Naive thymus-derived CD4-positive, alpha-beta T cell (primary cell): ENCODE measurements at regions of chr15 and their contacts with region 1.

Region 1: DNA sequence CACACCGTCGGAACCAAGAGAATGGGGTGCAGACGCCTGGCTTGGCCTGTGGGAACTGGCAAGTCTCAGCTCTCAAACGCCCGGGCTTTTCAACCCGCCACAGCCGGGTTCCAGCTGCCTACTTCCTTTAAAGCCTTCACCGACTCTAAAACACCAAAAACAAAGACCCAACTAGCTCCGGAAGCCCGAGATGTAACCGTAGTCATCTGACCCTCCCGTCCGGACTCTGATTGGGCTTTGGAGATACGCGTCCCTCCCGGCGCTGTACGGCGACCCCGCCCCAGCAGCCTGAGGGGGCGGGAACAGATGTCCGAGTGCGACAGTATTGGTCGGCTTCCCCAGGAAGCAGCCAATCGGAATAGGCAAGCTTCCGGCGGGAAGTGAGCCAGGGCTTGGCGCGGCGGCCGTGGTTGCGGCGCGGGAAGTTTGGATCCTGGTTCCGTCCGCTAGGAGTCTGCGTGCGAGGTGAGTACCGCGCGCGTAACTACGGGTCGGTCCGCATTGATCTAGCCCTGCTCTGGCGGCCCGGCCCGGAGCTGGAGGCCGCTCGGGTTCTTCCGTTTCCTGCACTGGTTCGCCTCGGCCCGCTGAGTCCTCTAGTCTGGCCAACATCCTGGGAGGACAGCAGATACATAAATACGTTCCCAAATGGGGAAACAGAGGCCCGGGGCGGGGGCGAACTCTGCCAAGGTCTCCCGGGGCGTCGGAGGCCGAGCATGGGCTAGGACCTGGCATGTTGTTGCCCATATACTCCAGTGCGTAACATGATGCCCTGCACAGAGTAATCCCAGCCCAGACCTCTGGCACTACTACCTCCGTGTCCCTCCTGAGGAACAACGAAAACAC is at the start of gene BLM:
- DNase-seq: peak; percentile 83 to 98 (median 96)
- ATAC-seq: peak; percentile 100
- H3K4me3 ChIP-seq: peak within 1 kb of the TSS; percentile 75
- H3K4me3 Mint-ChIP-seq: peak within 1 kb of the TSS; percentile 92 to 98 (median 95)
- H3K27ac ChIP-seq: peak within 1 kb of the TSS; percentile 85
- H3K27ac Mint-ChIP-seq: peak within 1 kb of the TSS; percentile 81 to 97 (median 95)
- H3K4me1 ChIP-seq: peaks cover 5 to 9% of the 10 kb centered on the region in 2 donors
- H3K4me1 Mint-ChIP-seq: peaks cover 20 to 35% (median 30%) of the 10 kb centered on the region in 7 donors
- H3K27me3 ChIP-seq: no peaks in the 10 kb centered on the region
- H3K27me3 Mint-ChIP-seq: no peaks in the 10 kb centered on the region
- total RNA-seq, gene BLM: 3.5 to 53.1 (median 6.6) TPM

Region 2: GRCh38 chr15:90265271-90266060 is 451.7 kb before region 1 on chr15 and contains the start of gene NGRN:
- CTCF ChIA-PET with region 1: no interaction called
- POLR2A ChIA-PET with region 1: no interaction called
- intact Hi-C with region 1: loop called in 1 of 2 experiments (anchors 1 kb)
- DNase-seq: peak; percentile 81 to 96 (median 93)
- ATAC-seq: peak; percentile 94
- H3K4me3 ChIP-seq: peak within 1 kb of the TSS; percentile 84
- H3K4me3 Mint-ChIP-seq: peak within 1 kb of the TSS; percentile 95 to 99 (median 97)
- H3K27ac ChIP-seq: peak within 1 kb of the TSS; percentile 96
- H3K27ac Mint-ChIP-seq: peak within 1 kb of the TSS; percentile 98 to 100 (median 99)
- H3K4me1 ChIP-seq: peaks cover 36 to 40% of the 10 kb centered on the region in 2 donors
- H3K4me1 Mint-ChIP-seq: peaks cover 22 to 60% (median 48%) of the 10 kb centered on the region in 7 donors
- H3K27me3 ChIP-seq: no peaks in the 10 kb centered on the region
- H3K27me3 Mint-ChIP-seq: no peaks in the 10 kb centered on the region
- total RNA-seq, gene NGRN: 34.1 to 51.5 (median 48.4) TPM

Region 3: GRCh38 chr15:90648137-90649070 is 68.8 kb before region 1 on chr15:
- CTCF ChIA-PET with region 1: interaction called, 5 read pairs
- POLR2A ChIA-PET with region 1: interaction called, 4 read pairs
- intact Hi-C with region 1: loop called (anchors 1 kb)
- DNase-seq: peak in 8 of 9 donors; percentile 48 to 69 (median 58)
- ATAC-seq: peak; percentile 83
- H3K4me3 ChIP-seq: no peak overlapping the region
- H3K4me3 Mint-ChIP-seq: peak overlapping the region; percentile 29 to 83 (median 68)
- H3K27ac ChIP-seq: no peak overlapping the region
- H3K27ac Mint-ChIP-seq: peak overlapping the region in 6 of 9 donors; percentile 31 to 95 (median 47)
- H3K4me1 ChIP-seq: peaks cover 9 to 15% of the 10 kb centered on the region in 2 donors
- H3K4me1 Mint-ChIP-seq: peaks cover 27 to 54% (median 37%) of the 10 kb centered on the region in 7 donors
- H3K27me3 ChIP-seq: no peaks in the 10 kb centered on the region
- H3K27me3 Mint-ChIP-seq: peaks cover 0 to 4% (median 0%) of the 10 kb centered on the region in 5 donors

Region 4: DNA sequence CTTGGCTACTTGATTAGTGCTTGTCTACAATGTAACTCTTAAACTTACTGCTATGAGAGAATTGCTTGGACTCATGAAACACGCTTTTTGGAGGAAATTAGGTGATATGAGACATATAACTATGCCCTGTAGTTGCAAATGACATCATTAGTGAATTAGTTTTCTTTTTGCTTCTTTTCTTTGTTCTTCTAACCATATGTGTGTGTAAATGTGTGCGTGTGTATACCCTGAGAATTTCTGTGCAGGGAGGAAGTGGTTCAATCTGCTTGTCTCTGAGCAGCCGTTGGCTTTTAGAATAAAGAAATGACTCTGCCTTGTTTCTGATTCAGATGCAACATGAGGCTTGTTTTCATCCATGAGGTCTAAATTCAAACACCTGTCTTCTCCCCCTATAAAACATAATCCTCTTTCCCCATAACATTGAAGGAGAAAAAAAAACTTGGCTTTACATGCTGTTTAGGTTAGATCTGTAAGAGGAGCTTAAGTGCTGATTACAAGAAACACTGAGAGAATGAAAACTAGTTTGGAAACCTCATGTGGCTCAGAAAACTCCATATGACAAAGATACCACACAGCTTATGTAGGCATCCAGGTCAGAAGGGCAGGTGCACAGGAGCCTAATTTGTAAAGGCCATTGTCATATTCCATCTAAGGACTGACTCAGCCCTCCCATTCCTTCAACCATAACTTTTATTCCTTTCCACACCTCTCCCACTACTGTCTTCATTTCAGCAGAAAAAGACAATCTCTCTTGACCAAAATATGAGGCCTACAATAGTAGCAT is 30.6 kb before region 1 on chr15:
- CTCF ChIA-PET with region 1: no interaction called
- POLR2A ChIA-PET with region 1: interaction called, 6 read pairs
- intact Hi-C with region 1: loop called (anchors 2 kb)
- DNase-seq: peak in 7 of 9 donors; percentile 52 to 83 (median 72)
- ATAC-seq: peak; percentile 91
- H3K4me3 ChIP-seq: no peak overlapping the region
- H3K4me3 Mint-ChIP-seq: peak overlapping the region; percentile 16 to 77 (median 46)
- H3K27ac ChIP-seq: peak overlapping the region; percentile 24
- H3K27ac Mint-ChIP-seq: peak overlapping the region; percentile 41 to 97 (median 80)
- H3K4me1 ChIP-seq: peaks cover 10 to 20% of the 10 kb centered on the region in 2 donors
- H3K4me1 Mint-ChIP-seq: peaks cover 25 to 51% (median 36%) of the 10 kb centered on the region in 7 donors
- H3K27me3 ChIP-seq: no peaks in the 10 kb centered on the region
- H3K27me3 Mint-ChIP-seq: no peaks in the 10 kb centered on the region

Region 5: DNA sequence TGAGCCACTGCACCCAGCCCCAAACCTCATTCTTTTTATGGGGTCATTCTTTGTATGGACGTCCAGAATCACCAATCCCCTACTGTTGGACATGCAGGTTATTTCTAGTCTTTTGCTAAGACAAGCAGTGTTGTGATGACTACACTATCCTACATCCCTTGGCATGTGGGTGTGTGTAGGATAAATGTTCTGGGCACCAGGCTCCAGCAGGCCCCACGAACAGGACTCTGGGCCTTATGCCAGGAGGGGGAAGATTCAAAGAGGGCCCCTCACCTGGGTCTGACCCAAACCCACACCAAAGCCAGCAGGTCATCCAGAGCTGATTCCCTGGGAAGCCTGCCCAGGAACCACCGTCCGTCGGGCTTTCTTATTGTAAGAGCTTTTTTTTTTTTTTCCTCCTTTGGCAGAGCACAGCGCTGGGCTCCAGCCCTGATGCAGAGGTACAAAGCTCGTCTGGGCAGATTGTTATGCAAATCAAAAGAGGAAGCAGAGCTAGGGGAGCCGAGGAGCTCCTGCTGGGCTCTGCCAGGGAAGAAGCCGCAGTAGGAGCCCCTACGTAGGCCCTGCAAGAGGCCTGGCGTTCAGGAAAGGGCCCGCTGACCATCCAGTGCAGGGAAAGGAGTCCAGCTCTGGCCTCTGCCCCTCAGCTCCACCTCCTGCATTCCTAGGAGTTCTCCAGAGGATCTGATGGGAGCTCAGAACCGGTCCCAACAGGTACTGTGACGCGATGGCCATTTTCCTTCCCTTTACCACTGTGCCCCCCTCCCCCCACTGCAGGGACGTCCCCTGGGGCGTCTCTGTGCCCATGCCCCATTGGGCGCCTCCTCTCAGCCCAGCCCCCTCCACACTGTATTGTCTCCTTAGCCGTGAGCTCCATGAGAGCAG is 122.2 kb after region 1 on chr15:
- CTCF ChIA-PET with region 1: no interaction called
- POLR2A ChIA-PET with region 1: interaction called, 4 read pairs
- intact Hi-C with region 1: loop called in 1 of 2 experiments (anchors 1 kb)
- DNase-seq: peak in 1 of 9 donors; percentile 28
- ATAC-seq: no peak
- H3K4me3 ChIP-seq: peak overlapping the region; percentile 2
- H3K4me3 Mint-ChIP-seq: peak overlapping the region; percentile 32 to 78 (median 58)
- H3K27ac ChIP-seq: peak overlapping the region; percentile 35
- H3K27ac Mint-ChIP-seq: peak overlapping the region in 8 of 9 donors; percentile 53 to 91 (median 79)
- H3K4me1 ChIP-seq: peaks cover 18 to 27% of the 10 kb centered on the region in 2 donors
- H3K4me1 Mint-ChIP-seq: peaks cover 21 to 86% (median 30%) of the 10 kb centered on the region in 7 donors
- H3K27me3 ChIP-seq: no peaks in the 10 kb centered on the region
- H3K27me3 Mint-ChIP-seq: no peaks in the 10 kb centered on the region

Region 6: GRCh38 chr15:90902040-90902839 is 185.0 kb after region 1 on chr15:
- CTCF ChIA-PET with region 1: no interaction called
- POLR2A ChIA-PET with region 1: interaction called, 4 read pairs
- intact Hi-C with region 1: loop called in 1 of 2 experiments (anchors 1 kb)
- DNase-seq: peak; percentile 60 to 81 (median 73)
- ATAC-seq: peak; percentile 84
- H3K4me3 ChIP-seq: peak overlapping the region; percentile 82
- H3K4me3 Mint-ChIP-seq: peak overlapping the region; percentile 85 to 96 (median 90)
- H3K27ac ChIP-seq: peak overlapping the region; percentile 72
- H3K27ac Mint-ChIP-seq: peak overlapping the region; percentile 81 to 95 (median 90)
- H3K4me1 ChIP-seq: peaks cover 12 to 17% of the 10 kb centered on the region in 2 donors
- H3K4me1 Mint-ChIP-seq: peaks cover 11 to 37% (median 34%) of the 10 kb centered on the region in 7 donors
- H3K27me3 ChIP-seq: no peaks in the 10 kb centered on the region
- H3K27me3 Mint-ChIP-seq: no peaks in the 10 kb centered on the region

Region 7: DNA sequence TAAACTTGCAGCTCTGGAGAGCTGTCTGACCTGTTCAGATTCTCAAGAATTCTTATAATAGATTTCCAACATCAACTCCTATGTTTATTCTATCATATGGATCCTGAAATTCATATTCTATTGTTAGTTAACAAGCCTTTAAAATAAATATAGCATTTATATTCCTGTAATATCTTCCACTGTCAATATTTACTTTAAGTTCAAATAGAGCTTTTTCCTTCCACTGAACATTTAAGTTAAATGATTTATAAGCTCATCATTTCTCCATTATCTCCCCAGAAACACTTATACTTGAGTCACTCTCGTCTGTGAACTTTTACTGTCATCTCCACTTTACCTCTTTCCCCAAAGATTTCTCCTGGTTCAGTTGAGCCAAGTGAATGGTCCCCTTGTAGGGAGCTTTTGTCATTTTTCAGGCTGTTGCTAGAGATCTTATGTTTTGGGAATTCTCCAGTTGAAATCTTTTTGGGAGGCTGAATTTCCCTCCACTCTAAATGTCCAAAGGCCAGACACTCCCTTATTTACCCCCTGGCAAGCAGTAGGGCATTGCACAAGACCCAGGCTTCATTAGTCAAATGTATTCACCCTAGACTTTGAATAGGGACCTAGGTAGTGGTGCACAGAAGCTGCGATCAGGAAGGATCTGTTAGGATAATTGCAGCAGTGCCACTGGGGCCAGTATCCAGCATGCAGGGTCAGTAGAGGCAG is 779.6 kb after region 1 on chr15:
- CTCF ChIA-PET with region 1: no interaction called
- POLR2A ChIA-PET with region 1: no interaction called
- intact Hi-C with region 1: no loop called
- DNase-seq: no peak
- ATAC-seq: no peak
- H3K4me3 ChIP-seq: no peak overlapping the region
- H3K4me3 Mint-ChIP-seq: no peak overlapping the region
- H3K27ac ChIP-seq: no peak overlapping the region
- H3K27ac Mint-ChIP-seq: peak overlapping the region in 1 of 9 donors; percentile 16
- H3K4me1 ChIP-seq: peaks cover 0 to 2% of the 10 kb centered on the region in 2 donors
- H3K4me1 Mint-ChIP-seq: peaks cover 0 to 18% (median 7%) of the 10 kb centered on the region in 7 donors
- H3K27me3 ChIP-seq: no peaks in the 10 kb centered on the region
- H3K27me3 Mint-ChIP-seq: peaks cover 0 to 21% (median 0%) of the 10 kb centered on the region in 5 donors